ENCODE measurements at regions of chr11 and their contacts with region 1.

Region 1: GRCh38 chr11:66677599-66678375 is at the start of gene RBM4B:
- DNase-seq: peak; percentile 95 to 97 (median 96)
- H3K4me3 ChIP-seq: peak within 1 kb of the TSS; percentile 80 to 87
- H3K4me3 Mint-ChIP-seq: peak within 1 kb of the TSS; percentile 91 to 99 (median 96)
- H3K27ac ChIP-seq: peak within 1 kb of the TSS; percentile 98
- H3K27ac Mint-ChIP-seq: peak within 1 kb of the TSS; percentile 98 to 100 (median 99)
- H3K4me1 ChIP-seq: peaks cover 34% of the 10 kb centered on the region
- H3K4me1 Mint-ChIP-seq: peaks cover 21 to 53% (median 34%) of the 10 kb centered on the region in 4 donors
- H3K27me3 ChIP-seq: no peaks in the 10 kb centered on the region
- H3K27me3 Mint-ChIP-seq: no peaks in the 10 kb centered on the region
- total RNA-seq, gene RBM4B: 26.6 to 26.9 TPM

Region 2: DNA sequence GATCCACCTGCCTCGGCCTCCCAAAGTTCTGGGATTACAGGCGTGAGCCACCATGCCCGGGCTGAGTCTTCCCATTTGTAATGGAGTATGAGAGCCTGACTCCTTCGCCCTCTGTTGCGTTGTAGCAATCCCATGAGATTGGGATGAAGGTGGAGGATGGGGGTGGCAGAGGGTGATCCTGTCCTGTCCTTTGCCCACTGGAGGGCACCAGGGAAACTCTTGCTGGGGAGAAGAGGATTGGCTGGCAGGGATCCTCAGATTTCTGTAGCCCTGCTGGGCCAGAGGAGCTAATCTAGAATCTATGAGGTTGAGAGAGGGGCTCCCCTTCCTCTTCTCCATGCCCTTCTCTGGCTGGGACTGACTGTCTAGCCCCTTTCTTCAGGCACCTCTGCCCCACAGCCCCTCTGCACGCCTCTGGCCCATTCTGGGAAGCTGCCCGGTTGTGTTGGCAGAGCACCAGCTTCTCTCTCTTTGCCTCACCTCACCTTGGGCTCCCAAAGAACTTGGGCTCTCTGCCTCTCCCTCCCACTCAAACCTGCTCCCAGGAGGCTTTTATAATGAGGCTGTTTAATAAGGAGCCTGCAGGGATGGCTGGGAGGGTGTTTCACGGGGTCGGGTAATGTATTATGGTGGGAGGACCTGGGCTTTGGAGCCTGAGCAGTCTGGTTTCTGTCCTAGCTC is 642.0 kb before region 1 on chr11:
- CTCF ChIA-PET with region 1: no interaction called
- POLR2A ChIA-PET with region 1: no interaction called
- intact Hi-C with region 1: no loop called
- DNase-seq: no peak
- H3K4me3 ChIP-seq: no peak overlapping the region
- H3K4me3 Mint-ChIP-seq: no peak overlapping the region
- H3K27ac ChIP-seq: no peak overlapping the region
- H3K27ac Mint-ChIP-seq: no peak overlapping the region
- H3K4me1 ChIP-seq: no peaks in the 10 kb centered on the region
- H3K4me1 Mint-ChIP-seq: no peaks in the 10 kb centered on the region
- H3K27me3 ChIP-seq: no peaks in the 10 kb centered on the region
- H3K27me3 Mint-ChIP-seq: peaks cover 0 to 4% of the 10 kb centered on the region in 2 donors

Region 3: DNA sequence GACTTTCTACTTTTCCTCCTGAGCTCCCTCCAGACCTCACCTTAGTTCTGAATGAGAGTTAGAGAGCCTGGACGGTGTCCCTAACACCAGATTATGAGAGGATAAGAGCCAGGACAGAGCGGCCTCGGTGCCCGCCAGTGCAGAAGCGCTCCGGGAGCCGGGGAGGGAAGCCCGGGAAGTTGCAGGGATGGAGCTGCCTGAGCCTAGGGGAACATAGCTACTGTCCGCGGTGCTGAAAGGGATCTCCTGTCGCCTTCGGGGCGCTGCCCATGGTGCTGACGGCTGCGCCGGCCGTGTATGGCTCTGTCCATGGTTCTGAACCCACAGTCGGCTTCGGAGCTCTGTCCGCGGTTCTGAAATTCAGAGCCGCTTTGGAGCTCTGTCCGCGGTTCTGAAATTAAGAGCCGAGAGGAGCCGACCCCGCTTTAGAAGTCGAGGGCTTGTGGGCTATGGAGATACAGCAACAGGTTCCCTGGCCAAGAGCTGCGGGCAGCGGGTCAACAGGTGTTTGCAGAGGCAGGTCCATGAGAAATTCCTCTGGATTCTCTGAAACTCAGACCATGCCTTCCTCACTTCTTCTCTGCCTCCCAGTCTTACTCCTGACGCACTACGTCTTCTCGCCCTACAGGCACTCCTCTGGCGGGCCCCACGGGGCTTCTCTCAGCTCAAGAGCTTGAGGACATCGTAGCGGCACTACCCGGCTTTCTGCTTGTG is 256.1 kb before region 1 on chr11:
- CTCF ChIA-PET with region 1: interaction called, 3 read pairs
- POLR2A ChIA-PET with region 1: interaction called, 6 read pairs
- intact Hi-C with region 1: loop called (anchors 5 kb)
- DNase-seq: peak; percentile 83 to 90 (median 85)
- H3K4me3 ChIP-seq: no peak overlapping the region
- H3K4me3 Mint-ChIP-seq: peak overlapping the region in 4 of 8 donors; percentile 30 to 64 (median 35)
- H3K27ac ChIP-seq: no peak overlapping the region
- H3K27ac Mint-ChIP-seq: peak overlapping the region in 4 of 7 donors; percentile 79 to 91 (median 88)
- H3K4me1 ChIP-seq: no peaks in the 10 kb centered on the region
- H3K4me1 Mint-ChIP-seq: peaks cover 6 to 23% (median 11%) of the 10 kb centered on the region in 4 donors
- H3K27me3 ChIP-seq: peaks cover 23% of the 10 kb centered on the region
- H3K27me3 Mint-ChIP-seq: peaks cover 23 to 28% of the 10 kb centered on the region in 2 donors

Region 4: DNA sequence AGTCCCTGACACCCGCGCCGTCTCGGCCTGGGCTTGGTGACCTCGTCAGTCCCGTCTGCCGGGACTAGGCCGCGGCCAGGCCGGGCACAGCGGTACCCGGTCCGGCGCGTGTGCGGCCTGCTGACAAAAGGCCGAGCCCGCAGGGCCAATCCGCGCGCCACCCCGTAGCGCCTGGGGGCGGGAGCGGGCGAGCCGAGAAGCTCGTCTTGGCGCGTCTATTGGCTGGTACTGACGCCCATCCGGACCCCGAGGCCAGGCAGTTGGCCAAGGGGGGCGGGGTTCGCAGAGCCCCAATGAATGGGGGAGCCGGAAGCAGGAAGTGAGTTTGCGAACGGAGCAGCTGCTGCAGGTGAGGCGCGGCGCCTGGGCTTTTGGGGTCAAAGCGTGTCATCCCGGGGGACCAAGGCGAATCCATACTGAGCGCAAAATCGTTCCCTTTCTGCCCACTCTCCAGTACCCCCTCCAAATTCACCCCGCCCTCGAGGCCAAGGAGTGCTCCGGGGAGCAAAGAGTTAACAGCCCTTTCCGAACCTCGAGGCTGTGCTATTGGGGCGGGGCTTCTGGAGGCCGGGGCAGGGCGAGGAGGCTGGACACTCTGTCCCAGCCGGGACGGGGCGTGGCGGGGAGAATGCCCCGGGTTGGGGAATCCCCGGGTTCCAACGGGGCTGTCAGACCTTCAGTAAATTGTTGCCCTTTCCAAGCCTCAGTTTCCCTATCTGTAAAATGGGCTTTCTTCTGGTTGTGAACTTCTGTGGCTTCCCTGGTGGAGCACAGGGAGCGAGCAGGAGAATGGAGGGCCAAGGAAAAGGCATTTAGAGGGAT is 197.5 kb before region 1 on chr11 and contains the start of gene DPP3:
- CTCF ChIA-PET with region 1: interaction called, 13 read pairs
- POLR2A ChIA-PET with region 1: interaction called, 16 read pairs
- intact Hi-C with region 1: loop called (anchors 1 kb)
- DNase-seq: peak; percentile 94 to 96 (median 96)
- H3K4me3 ChIP-seq: peak within 1 kb of the TSS; percentile 88 to 90
- H3K4me3 Mint-ChIP-seq: peak within 1 kb of the TSS; percentile 87 to 96 (median 90)
- H3K27ac ChIP-seq: peak within 1 kb of the TSS; percentile 81
- H3K27ac Mint-ChIP-seq: peak within 1 kb of the TSS; percentile 78 to 94 (median 91)
- H3K4me1 ChIP-seq: peaks cover 20% of the 10 kb centered on the region
- H3K4me1 Mint-ChIP-seq: peaks cover 13 to 48% (median 21%) of the 10 kb centered on the region in 4 donors
- H3K27me3 ChIP-seq: no peaks in the 10 kb centered on the region
- H3K27me3 Mint-ChIP-seq: no peaks in the 10 kb centered on the region
- total RNA-seq, gene DPP3: 21.0 to 24.0 TPM

Region 5: GRCh38 chr11:66579017-66579606 is 98.7 kb before region 1 on chr11:
- CTCF ChIA-PET with region 1: interaction called, 268 read pairs
- POLR2A ChIA-PET with region 1: interaction called, 75 read pairs
- intact Hi-C with region 1: loop called (anchors 1 kb)
- DNase-seq: peak; percentile 64 to 72 (median 68)
- H3K4me3 ChIP-seq: no peak overlapping the region
- H3K4me3 Mint-ChIP-seq: peak overlapping the region in 2 of 8 donors; percentile 33 to 47
- H3K27ac ChIP-seq: no peak overlapping the region
- H3K27ac Mint-ChIP-seq: peak overlapping the region in 3 of 7 donors; percentile 9 to 68 (median 25)
- H3K4me1 ChIP-seq: peaks cover 5% of the 10 kb centered on the region
- H3K4me1 Mint-ChIP-seq: peaks cover 0 to 12% (median 6%) of the 10 kb centered on the region in 4 donors
- H3K27me3 ChIP-seq: no peaks in the 10 kb centered on the region
- H3K27me3 Mint-ChIP-seq: peaks cover 0 to 7% of the 10 kb centered on the region in 2 donors

Region 6: DNA sequence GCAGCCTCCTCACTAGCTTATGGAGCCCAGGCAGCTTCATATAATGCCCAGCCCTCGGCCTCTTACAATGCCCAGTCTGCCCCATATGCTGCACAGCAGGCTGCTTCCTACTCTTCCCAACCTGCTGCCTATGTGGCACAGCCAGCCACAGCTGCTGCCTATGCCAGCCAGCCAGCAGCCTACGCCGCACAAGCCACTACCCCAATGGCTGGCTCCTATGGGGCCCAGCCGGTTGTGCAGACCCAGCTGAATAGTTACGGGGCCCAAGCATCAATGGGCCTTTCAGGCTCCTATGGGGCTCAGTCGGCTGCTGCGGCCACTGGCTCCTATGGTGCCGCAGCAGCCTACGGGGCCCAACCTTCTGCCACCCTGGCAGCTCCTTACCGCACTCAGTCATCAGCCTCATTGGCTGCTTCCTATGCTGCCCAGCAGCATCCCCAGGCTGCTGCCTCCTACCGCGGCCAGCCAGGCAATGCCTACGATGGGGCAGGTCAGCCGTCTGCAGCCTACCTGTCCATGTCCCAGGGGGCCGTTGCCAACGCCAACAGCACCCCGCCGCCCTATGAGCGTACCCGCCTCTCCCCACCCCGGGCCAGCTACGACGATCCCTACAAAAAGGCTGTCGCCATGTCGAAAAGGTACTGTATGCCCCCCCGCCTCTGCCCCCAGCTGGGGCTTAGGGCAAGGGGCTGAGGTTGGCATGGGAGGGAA is 52.6 kb before region 1 on chr11:
- CTCF ChIA-PET with region 1: interaction called, 11 read pairs
- POLR2A ChIA-PET with region 1: interaction called, 18 read pairs
- intact Hi-C with region 1: no loop called
- DNase-seq: no peak
- H3K4me3 ChIP-seq: no peak overlapping the region
- H3K4me3 Mint-ChIP-seq: no peak overlapping the region
- H3K27ac ChIP-seq: no peak overlapping the region
- H3K27ac Mint-ChIP-seq: peak overlapping the region in 2 of 7 donors; percentile 29 to 71
- H3K4me1 ChIP-seq: peaks cover 62% of the 10 kb centered on the region
- H3K4me1 Mint-ChIP-seq: peaks cover 44 to 90% (median 67%) of the 10 kb centered on the region in 4 donors
- H3K27me3 ChIP-seq: no peaks in the 10 kb centered on the region
- H3K27me3 Mint-ChIP-seq: no peaks in the 10 kb centered on the region

Region 7: GRCh38 chr11:66820381-66820780 is 142.6 kb after region 1 on chr11:
- CTCF ChIA-PET with region 1: no interaction called
- POLR2A ChIA-PET with region 1: no interaction called
- intact Hi-C with region 1: no loop called
- DNase-seq: no peak
- H3K4me3 ChIP-seq: no peak overlapping the region
- H3K4me3 Mint-ChIP-seq: no peak overlapping the region
- H3K27ac ChIP-seq: no peak overlapping the region
- H3K27ac Mint-ChIP-seq: peak overlapping the region in 1 of 7 donors; percentile 37
- H3K4me1 ChIP-seq: no peaks in the 10 kb centered on the region
- H3K4me1 Mint-ChIP-seq: no peaks in the 10 kb centered on the region
- H3K27me3 ChIP-seq: no peaks in the 10 kb centered on the region
- H3K27me3 Mint-ChIP-seq: no peaks in the 10 kb centered on the region

Region 8: DNA sequence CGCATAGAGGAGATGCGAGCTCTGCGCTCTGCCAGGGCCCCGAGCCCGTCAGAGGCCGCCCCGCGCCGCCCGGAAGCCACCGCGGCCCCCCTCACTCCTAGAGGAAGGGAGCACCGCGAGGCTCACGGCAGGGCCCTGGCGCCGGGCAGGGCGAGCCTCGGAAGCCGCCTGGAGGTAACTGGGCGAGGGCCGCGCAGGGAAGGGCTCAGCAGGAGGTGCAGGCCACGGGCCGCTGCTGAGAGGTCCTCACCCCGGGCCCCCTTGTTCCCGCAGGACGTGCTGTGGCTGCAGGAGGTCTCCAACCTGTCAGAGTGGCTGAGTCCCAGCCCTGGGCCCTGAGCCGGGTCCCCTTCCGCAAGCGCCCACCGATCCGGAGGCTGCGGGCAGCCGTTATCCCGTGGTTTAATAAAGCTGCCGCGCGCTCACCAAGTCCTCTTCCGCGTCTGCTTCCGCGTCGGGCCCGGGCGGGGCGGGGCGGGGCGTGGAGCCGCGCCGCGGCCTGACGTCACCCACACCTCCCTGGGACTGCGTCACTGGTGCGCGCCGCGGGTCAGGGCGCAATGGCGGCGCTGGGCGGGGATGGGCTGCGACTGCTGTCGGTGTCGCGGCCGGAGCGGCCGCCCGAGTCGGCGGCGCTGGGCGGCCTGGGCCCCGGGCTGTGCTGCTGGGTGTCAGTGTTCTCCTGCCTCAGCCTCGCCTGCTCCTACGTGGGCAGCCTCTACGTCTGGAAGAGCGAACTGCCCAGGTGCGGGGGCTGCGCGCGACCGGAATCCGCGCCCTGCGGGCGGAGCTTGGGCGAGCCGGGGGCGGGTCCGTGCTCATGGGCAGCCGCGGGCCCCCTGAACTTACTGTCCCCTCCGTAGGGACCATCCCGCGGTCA is 165.3 kb after region 1 on chr11 and contains the start of gene RCE1:
- CTCF ChIA-PET with region 1: interaction called, 6 read pairs
- POLR2A ChIA-PET with region 1: interaction called, 30 read pairs
- intact Hi-C with region 1: no loop called
- DNase-seq: peak; percentile 85 to 93 (median 90)
- H3K4me3 ChIP-seq: peak within 1 kb of the TSS; percentile 88 to 96
- H3K4me3 Mint-ChIP-seq: peak within 1 kb of the TSS; percentile 87 to 96 (median 93)
- H3K27ac ChIP-seq: peak within 1 kb of the TSS; percentile 97
- H3K27ac Mint-ChIP-seq: peak within 1 kb of the TSS; percentile 91 to 98 (median 96)
- H3K4me1 ChIP-seq: peaks cover 50% of the 10 kb centered on the region
- H3K4me1 Mint-ChIP-seq: peaks cover 33 to 55% (median 44%) of the 10 kb centered on the region in 4 donors
- H3K27me3 ChIP-seq: no peaks in the 10 kb centered on the region
- H3K27me3 Mint-ChIP-seq: no peaks in the 10 kb centered on the region
- total RNA-seq, gene RCE1: 30.0 to 34.5 TPM

Measured in CD4-positive, alpha-beta memory T cell (primary cell).